Activated CD4-positive, alpha-beta memory T cell treated with anti-CD3 and anti-CD28 coated beads, Interleukin-2, amount 10 ng/mL, durations not matched to agents 7 days and 5 days (primary cell): ENCODE measurements at regions of chr16 and their contacts with region 1.

Region 1: DNA sequence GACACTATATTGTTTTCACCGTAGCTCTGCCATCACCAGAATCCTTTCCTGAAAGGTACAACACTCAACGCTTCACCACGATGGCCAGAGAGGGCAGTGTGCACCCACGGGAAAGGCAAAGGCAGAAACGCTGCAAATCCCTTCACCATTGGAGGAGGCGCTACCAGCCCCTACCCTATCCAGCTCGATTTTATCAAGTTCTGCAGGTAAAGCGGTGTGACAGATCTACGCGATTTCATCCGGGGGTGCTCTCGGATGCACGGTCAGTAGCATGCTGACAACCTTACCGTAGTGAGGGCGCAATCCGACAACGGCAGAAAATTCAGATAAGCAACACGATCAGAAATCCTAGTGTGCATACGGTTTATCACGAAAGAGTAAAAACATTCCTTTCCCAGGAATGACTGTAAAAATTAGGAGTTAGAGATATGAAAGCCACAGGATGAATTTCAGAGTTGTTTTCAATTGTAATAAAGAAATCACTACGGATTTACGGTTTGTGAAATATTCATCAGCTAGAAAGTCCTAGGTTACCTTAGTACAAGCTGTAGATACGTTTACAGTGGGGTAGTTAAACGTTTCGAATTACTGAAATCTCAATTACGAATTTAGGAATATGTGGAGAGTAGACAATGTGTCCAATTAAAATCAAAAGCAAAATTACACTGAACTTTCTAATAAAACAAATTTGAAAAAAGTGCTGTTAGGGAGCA is 1.8 kb downstream of the NETO2 start:
- DNase-seq: peak; percentile 89
- H3K4me3 Mint-ChIP-seq: peak overlapping the region; percentile 81
- H3K27ac Mint-ChIP-seq: peak overlapping the region; percentile 32
- H3K4me1 Mint-ChIP-seq: peaks cover 55% of the 10 kb centered on the region
- H3K27me3 Mint-ChIP-seq: peaks cover 14% of the 10 kb centered on the region

Region 2: GRCh38 chr16:47037746-47038458 is 104.0 kb before region 1 on chr16:
- CTCF ChIA-PET with region 1: interaction called, 65 read pairs
- POLR2A ChIA-PET with region 1: interaction called, 20 read pairs
- DNase-seq: peak; percentile 90
- H3K4me3 Mint-ChIP-seq: peak overlapping the region; percentile 65
- H3K27ac Mint-ChIP-seq: no peak overlapping the region
- H3K4me1 Mint-ChIP-seq: peaks cover 8% of the 10 kb centered on the region
- H3K27me3 Mint-ChIP-seq: peaks cover 12% of the 10 kb centered on the region

Region 3: DNA sequence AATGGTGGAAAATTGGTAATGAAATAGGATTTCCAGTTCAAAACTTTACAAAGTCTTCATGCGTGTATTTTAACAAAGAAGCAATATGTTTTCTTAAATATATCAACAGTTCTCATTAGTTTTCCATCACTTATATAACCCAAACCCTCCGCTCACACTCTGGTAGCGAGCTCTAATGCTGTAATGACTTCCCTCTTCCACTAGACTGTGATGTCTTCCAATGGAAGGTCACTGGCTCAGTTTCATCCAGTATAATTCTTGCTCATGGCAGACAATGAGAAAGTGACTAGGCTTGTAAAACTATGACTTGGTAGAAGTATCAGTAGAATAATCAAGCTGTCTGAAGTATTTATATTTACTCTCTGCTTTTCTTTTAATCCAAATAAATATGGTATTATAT is 31.0 kb before region 1 on chr16:
- CTCF ChIA-PET with region 1: interaction called, 12 read pairs
- POLR2A ChIA-PET with region 1: interaction called, 7 read pairs
- DNase-seq: no peak
- H3K4me3 Mint-ChIP-seq: no peak overlapping the region
- H3K27ac Mint-ChIP-seq: no peak overlapping the region
- H3K4me1 Mint-ChIP-seq: peaks cover 24% of the 10 kb centered on the region
- H3K27me3 Mint-ChIP-seq: no peaks in the 10 kb centered on the region

Region 4: DNA sequence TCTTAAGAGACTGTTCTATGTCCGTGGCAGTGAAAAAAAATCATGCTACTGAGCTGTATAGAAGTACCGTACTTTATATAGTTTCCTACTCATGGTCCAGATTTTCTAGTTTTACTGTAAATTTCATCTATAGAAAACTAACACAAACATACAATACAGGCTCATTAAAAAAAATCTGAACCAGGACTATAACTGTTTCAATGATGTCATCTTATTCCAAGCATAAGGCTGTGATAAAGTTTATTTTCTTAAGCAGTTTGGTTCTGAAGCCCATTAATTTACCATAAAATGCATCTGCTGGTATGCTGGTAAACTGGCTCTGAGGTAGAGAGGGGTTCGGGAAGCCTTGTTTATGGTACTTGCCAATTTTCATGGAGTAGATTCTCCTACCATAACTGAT is 18.5 kb after region 1 on chr16:
- CTCF ChIA-PET with region 1: interaction called, 12 read pairs
- POLR2A ChIA-PET with region 1: interaction called, 4 read pairs
- DNase-seq: no peak
- H3K4me3 Mint-ChIP-seq: no peak overlapping the region
- H3K27ac Mint-ChIP-seq: no peak overlapping the region
- H3K4me1 Mint-ChIP-seq: no peaks in the 10 kb centered on the region
- H3K27me3 Mint-ChIP-seq: no peaks in the 10 kb centered on the region

Region 5: DNA sequence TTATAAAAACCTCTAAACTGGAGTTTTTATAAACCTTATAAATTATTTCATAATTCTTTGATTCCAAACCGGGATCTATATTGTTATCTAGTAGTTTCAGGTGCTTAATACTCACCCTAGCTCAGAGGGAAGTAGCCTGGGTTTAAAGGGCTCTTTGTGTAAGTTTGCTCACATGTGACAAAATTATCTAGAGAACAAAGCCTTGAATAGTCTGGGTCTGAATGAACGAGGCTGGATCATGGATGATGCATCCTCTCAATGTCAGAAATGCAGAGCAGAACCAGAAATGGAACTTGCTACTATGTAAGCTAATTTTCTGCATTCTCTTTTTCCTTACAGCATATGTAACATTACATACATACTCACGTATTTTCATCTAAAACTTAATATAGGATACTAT is 105.8 kb after region 1 on chr16:
- CTCF ChIA-PET with region 1: no interaction called
- POLR2A ChIA-PET with region 1: no interaction called
- DNase-seq: no peak
- H3K4me3 Mint-ChIP-seq: no peak overlapping the region
- H3K27ac Mint-ChIP-seq: no peak overlapping the region
- H3K4me1 Mint-ChIP-seq: no peaks in the 10 kb centered on the region
- H3K27me3 Mint-ChIP-seq: no peaks in the 10 kb centered on the region

Region 6: DNA sequence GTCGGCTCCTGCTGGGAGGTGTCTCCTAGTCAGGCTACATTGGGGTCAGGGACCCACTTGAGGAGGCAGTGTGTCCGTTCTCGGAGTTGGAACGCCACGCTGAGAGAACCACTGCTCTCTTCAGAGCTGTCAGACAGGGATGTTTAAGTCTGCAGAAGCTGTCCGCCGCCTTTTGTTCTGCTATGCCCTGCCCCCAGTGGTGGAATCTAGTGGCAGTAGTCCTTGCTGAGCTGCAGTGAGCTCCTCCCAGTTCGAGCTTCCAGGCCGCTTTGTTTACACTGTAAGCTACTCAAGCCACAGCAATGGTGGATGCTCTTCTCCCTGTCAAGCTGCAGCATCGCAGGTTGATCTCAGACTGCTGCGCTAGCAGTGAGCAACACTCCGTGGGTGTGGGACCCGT is 282.9 kb after region 1 on chr16:
- CTCF ChIA-PET with region 1: no interaction called
- POLR2A ChIA-PET with region 1: no interaction called
- DNase-seq: no peak
- H3K4me3 Mint-ChIP-seq: no peak overlapping the region
- H3K27ac Mint-ChIP-seq: no peak overlapping the region
- H3K4me1 Mint-ChIP-seq: no peaks in the 10 kb centered on the region
- H3K27me3 Mint-ChIP-seq: no peaks in the 10 kb centered on the region

Region 7: GRCh38 chr16:48164907-48165726 is 1023.2 kb after region 1 on chr16:
- CTCF ChIA-PET with region 1: interaction called, 30 read pairs
- POLR2A ChIA-PET with region 1: no interaction called
- DNase-seq: peak; percentile 70
- H3K4me3 Mint-ChIP-seq: no peak overlapping the region
- H3K27ac Mint-ChIP-seq: no peak overlapping the region
- H3K4me1 Mint-ChIP-seq: peaks cover 12% of the 10 kb centered on the region
- H3K27me3 Mint-ChIP-seq: peaks cover 4% of the 10 kb centered on the region